Left colon (tissue), 2 donors: ENCODE measurements at regions of chr5 and their contacts with region 1.

Region 1: GRCh38 chr5:149828161-149828884 is 98.2 kb downstream of the PPARGC1B start:
- DNase-seq: peak; percentile 76 to 95
- ATAC-seq: peak; percentile 77

Region 2: GRCh38 chr5:149636851-149637246 is 191.5 kb before region 1 on chr5:
- intact Hi-C with region 1: loop called (anchors 5 kb)
- DNase-seq: peak in 1 of 2 donors; percentile 99
- ATAC-seq: peak; percentile 35

Region 3: GRCh38 chr5:149724130-149724840 is 104.0 kb before region 1 on chr5:
- intact Hi-C with region 1: loop called in 1 of 2 experiments (anchors 10 kb)
- DNase-seq: no peak
- ATAC-seq: no peak

Region 4: GRCh38 chr5:149747141-149747832 is 81.0 kb before region 1 on chr5:
- intact Hi-C with region 1: no loop called
- DNase-seq: peak; percentile 88 to 97
- ATAC-seq: peak; percentile 88

Region 5: DNA sequence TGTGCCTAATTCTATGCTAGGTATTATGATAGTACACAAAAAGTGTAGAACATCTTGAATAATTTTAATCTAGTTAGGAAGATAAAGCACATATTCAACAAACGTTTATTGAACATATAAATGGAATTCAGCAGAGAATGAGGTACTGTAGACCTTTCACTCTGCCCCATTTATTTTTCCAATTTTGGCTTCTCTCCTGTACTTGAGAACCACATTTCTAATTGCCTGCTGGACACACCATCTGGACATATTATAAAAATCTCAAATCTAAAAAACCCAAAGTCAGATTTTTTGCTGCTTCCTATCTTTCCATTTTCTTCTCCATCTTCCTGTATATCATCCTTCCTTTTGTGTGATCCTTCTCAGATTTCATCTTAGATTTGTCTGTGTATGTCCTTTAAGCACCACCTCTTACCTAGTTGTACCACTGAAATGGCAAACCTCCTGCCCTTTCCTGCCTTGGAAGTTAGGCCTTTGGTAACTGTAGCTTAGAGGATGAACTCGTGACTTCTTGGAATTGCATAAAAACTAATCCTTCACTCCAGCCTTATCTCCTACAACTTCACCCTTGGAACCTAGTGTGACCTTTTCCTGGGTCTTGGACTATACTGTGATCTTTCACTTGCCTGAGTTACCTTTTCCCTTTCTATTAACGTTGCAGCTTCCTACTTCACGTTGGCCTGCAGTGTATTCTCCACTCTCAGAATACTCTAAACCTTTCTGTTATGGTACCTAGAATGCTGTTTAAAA is 141.0 kb after region 1 on chr5:
- intact Hi-C with region 1: no loop called
- DNase-seq: no peak
- ATAC-seq: peak; percentile 2